ENCODE measurements at regions of chr9 and their contacts with region 1.

Region 1: GRCh38 chr9:137223078-137223970 is 1.3 kb upstream of the RNF208 start:
- DNase-seq: peak; percentile 95 to 99
- H3K4me3 ChIP-seq: peak overlapping the region; percentile 90
- H3K27ac ChIP-seq: peak overlapping the region; percentile 79
- H3K4me1 ChIP-seq: peaks cover 54% of the 10 kb centered on the region
- H3K27me3 ChIP-seq: no peaks in the 10 kb centered on the region
- CTCF ChIP-seq: no peak

Region 2: GRCh38 chr9:136790927-136791641 is 432.2 kb before region 1 on chr9 and contains the start of gene TMEM141:
- CTCF ChIA-PET with region 1: no interaction called
- POLR2A ChIA-PET with region 1: interaction called, 12 read pairs
- intact Hi-C with region 1: no loop called
- DNase-seq: peak; percentile 94 to 100
- H3K4me3 ChIP-seq: peak within 1 kb of the TSS; percentile 68
- H3K27ac ChIP-seq: peak within 1 kb of the TSS; percentile 79
- H3K4me1 ChIP-seq: peaks cover 15% of the 10 kb centered on the region; the same call in 1 of the 2 replicates
- H3K27me3 ChIP-seq: no peaks in the 10 kb centered on the region
- CTCF ChIP-seq: no peak
- total RNA-seq, gene TMEM141: 83.6 and 124 TPM in 2 replicates

Region 3: GRCh38 chr9:137070201-137070905 is 153.0 kb before region 1 on chr9 and contains the start of gene SAPCD2:
- CTCF ChIA-PET with region 1: no interaction called
- POLR2A ChIA-PET with region 1: no interaction called
- intact Hi-C with region 1: loop called (anchors 1 kb)
- DNase-seq: peak; percentile 87 to 96
- H3K4me3 ChIP-seq: peak within 1 kb of the TSS; percentile 67
- H3K27ac ChIP-seq: no peak within 1 kb of the TSS
- H3K4me1 ChIP-seq: peaks cover 25% of the 10 kb centered on the region
- H3K27me3 ChIP-seq: no peaks in the 10 kb centered on the region
- CTCF ChIP-seq: no peak
- total RNA-seq, gene SAPCD2: 46.9 and 50.3 TPM in 2 replicates

Region 4: DNA sequence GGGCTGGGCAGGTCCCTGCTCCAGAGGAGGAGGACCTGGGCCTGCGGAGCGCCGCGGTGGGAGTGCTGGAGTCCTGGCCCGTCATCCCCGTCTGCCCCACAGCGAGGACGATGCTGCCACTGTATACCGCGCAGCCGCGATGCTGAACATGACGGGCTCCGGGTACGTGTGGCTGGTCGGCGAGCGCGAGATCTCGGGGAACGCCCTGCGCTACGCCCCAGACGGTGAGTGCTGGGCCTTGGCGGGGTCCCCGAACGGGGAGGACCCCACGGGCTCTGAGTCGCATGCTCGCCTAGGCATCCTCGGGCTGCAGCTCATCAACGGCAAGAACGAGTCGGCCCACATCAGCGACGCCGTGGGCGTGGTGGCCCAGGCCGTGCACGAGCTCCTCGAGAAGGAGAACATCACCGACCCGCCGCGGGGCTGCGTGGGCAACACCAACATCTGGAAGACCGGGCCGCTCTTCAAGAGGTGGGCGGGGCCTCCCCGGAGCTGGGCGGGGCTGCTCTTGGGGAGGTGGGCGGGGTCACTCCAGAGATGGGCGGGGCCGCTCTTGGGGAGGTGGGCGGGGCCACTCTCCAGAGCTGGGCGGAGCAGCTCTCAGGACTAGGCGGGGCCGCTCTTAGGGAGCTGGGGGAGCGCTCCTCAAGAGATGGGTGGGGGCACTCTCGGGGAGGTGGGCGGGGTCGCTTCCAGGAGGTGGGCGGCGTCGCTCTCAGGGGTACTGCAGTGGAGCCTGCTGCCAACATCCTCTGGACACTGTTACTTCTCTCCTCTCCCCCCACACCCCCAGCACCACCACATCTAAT is 66.6 kb before region 1 on chr9:
- CTCF ChIA-PET with region 1: no interaction called
- POLR2A ChIA-PET with region 1: interaction called, 10 read pairs
- intact Hi-C with region 1: no loop called
- DNase-seq: no peak
- H3K4me3 ChIP-seq: no peak overlapping the region
- H3K27ac ChIP-seq: no peak overlapping the region
- H3K4me1 ChIP-seq: no peaks in the 10 kb centered on the region
- H3K27me3 ChIP-seq: no peaks in the 10 kb centered on the region
- CTCF ChIP-seq: no peak

Region 5: DNA sequence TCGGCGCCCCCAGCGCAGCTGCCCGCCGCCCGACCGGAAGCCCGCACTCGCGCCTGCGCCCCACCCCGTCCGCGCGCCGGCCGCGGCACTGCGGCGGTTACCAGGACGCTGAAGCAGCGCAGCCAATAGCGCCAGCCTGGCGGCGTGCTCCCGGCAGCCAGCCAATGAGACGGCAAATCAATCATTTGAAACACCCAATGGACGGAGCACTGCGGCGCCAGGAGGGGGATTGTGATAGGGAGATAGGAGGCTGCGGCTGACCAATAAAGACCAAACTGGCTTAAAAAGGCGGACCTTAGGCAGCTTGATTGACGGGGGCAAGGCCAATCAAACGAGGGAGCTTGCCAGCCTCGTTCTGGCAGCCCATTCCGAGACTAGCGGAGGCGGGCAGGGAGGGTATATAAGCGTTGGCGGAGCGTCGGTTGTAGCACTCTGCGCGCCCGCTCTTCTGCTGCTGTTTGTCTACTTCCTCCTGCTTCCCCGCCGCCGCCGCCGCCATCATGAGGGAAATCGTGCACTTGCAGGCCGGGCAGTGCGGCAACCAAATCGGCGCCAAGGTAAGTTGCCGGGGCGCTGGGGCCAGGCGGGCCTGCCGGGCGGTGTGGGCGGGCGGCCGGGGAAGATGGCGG is 17.7 kb after region 1 on chr9 and contains the start of gene TUBB4B:
- CTCF ChIA-PET with region 1: interaction called, 8 read pairs
- POLR2A ChIA-PET with region 1: interaction called, 12 read pairs
- intact Hi-C with region 1: loop called (anchors 1 kb)
- DNase-seq: peak; percentile 98 to 100
- H3K4me3 ChIP-seq: peak within 1 kb of the TSS; percentile 97
- H3K27ac ChIP-seq: peak within 1 kb of the TSS; percentile 82
- H3K4me1 ChIP-seq: peaks cover 39% of the 10 kb centered on the region
- H3K27me3 ChIP-seq: no peaks in the 10 kb centered on the region
- CTCF ChIP-seq: no peak
- total RNA-seq, gene TUBB4B: 441 and 494 TPM in 2 replicates

Region 6: GRCh38 chr9:137516144-137516917 is 293.0 kb after region 1 on chr9:
- CTCF ChIA-PET with region 1: no interaction called
- POLR2A ChIA-PET with region 1: interaction called, 12 read pairs
- intact Hi-C with region 1: no loop called
- DNase-seq: no peak
- H3K4me3 ChIP-seq: no peak overlapping the region
- H3K27ac ChIP-seq: no peak overlapping the region
- H3K4me1 ChIP-seq: peaks cover 9% of the 10 kb centered on the region; the same call in 1 of the 2 replicates
- H3K27me3 ChIP-seq: no peaks in the 10 kb centered on the region
- CTCF ChIP-seq: no peak

Measured in PC-9 (cell line).